ENCODE measurements at regions of chr11 and their contacts with region 1.

Region 1: DNA sequence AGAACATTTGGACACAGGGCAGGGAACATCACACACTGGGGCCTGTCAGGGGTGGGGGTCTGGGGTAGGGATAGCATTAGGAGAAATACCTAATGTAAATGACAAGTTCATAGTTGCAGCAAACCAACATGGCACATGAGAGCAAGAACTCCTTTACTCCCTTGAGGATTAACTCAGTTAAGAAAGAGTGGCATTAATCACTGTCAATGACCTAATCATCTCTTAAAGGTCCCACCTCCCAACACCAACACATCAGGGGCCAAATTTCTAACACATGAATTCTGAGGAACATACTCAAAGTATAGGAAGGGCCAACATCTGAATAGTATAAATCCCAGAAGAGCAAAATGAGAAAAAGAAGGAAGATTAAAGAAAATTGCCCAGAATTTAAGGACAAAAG is 272.9 kb downstream of the SWAP70 start:
- DNase-seq: no peak
- H3K4me3 ChIP-seq: no peak overlapping the region
- H3K27ac ChIP-seq: no peak overlapping the region
- H3K4me1 ChIP-seq: no peaks in the 10 kb centered on the region
- CTCF ChIP-seq: no peak

Region 2: GRCh38 chr11:9838961-9839360 is 97.8 kb before region 1 on chr11:
- CTCF ChIA-PET with region 1: interaction called, 3 read pairs
- POLR2A ChIA-PET with region 1: interaction called, 10 read pairs
- intact Hi-C with region 1: no loop called
- DNase-seq: no peak
- H3K4me3 ChIP-seq: no peak overlapping the region
- H3K27ac ChIP-seq: no peak overlapping the region
- H3K4me1 ChIP-seq: peaks cover 6% of the 10 kb centered on the region
- CTCF ChIP-seq: no peak

Region 3: GRCh38 chr11:9982800-9983579 is 46.2 kb after region 1 on chr11:
- CTCF ChIA-PET with region 1: no interaction called
- POLR2A ChIA-PET with region 1: no interaction called
- intact Hi-C with region 1: no loop called
- DNase-seq: no peak
- H3K4me3 ChIP-seq: no peak overlapping the region
- H3K27ac ChIP-seq: no peak overlapping the region
- H3K4me1 ChIP-seq: peaks cover 23% of the 10 kb centered on the region
- CTCF ChIP-seq: no peak

Measured in OCI-LY7 (cell line).